CD4-positive, alpha-beta memory T cell (primary cell): ENCODE measurements at regions of chr2 and their contacts with region 1.

Region 1: DNA sequence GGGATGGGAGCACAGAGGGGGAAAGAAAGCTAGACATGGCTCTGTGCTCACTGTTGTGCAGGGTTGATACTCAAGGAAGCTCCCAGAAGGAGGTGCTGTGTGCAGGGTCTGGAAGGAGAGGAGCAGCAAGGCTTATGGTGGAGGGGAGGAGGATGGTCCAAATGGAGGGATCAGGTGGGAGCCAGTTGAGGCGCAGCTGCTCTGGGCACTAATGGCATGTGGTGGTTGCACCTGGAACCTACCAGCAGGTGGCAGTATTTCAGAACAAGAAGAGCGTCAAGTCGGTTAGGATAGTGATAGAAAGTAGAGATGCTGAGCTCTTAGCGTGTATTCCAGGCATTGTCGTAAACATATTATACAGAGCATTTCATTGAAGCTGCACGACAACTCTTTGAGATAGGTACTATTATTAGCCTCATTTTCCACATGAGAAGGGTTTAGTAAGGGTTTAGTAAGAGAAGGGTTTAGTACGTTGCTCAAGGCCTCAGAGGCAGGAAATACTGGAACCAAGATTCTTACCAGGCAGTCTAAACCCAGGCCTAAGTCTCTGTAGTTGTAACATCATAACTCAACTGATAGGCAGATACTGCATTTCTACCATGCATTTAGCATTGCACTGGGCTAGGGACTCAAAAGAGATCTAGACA is 223.7 kb downstream of the CYP26B1 start:
- DNase-seq: peak in 4 of 5 donors; percentile 30 to 46 (median 38)
- H3K4me3 ChIP-seq: no peak overlapping the region
- H3K4me3 Mint-ChIP-seq: peak overlapping the region in 1 of 8 donors; percentile 2
- H3K27ac ChIP-seq: no peak overlapping the region
- H3K27ac Mint-ChIP-seq: peak overlapping the region in 2 of 7 donors; percentile 20 to 51
- H3K4me1 ChIP-seq: no peaks in the 10 kb centered on the region
- H3K4me1 Mint-ChIP-seq: peaks cover 0 to 4% (median 0%) of the 10 kb centered on the region in 4 donors
- H3K27me3 ChIP-seq: no peaks in the 10 kb centered on the region
- H3K27me3 Mint-ChIP-seq: peaks cover 0 to 2% of the 10 kb centered on the region in 2 donors

Region 2: DNA sequence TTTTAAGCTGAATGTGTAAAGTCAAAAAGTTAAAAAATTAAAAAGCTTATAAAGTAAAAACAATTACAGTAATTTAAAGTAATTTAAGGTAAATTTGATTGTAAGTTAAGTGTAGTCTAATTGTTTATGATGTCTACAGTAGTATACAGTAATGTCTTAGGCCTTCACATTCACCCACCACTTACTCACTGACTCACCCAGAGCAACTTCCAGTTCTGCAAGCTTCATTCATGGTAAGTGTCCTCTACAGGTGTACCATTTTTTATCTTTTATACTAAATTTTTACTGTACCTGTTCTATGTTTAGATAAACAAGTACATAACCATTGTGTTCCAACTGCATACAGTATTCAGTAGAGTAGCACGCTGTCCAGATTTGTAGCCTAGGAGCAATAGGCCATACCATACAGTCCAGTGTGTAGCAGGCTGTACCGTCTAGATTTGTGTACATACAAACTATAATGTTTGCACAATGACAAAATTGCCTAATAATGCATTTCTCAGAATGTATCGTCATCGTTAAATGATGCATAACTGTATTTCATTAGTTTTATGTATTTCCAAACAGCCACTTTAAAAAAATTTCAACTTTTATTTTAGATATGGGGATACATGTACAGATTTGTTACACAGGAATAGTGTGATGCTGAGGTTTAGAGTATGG is 151.4 kb before region 1 on chr2:
- CTCF ChIA-PET with region 1: no interaction called
- POLR2A ChIA-PET with region 1: no interaction called
- intact Hi-C with region 1: no loop called
- DNase-seq: no peak
- H3K4me3 ChIP-seq: no peak overlapping the region
- H3K4me3 Mint-ChIP-seq: no peak overlapping the region
- H3K27ac ChIP-seq: no peak overlapping the region
- H3K27ac Mint-ChIP-seq: no peak overlapping the region
- H3K4me1 ChIP-seq: no peaks in the 10 kb centered on the region
- H3K4me1 Mint-ChIP-seq: no peaks in the 10 kb centered on the region
- H3K27me3 ChIP-seq: no peaks in the 10 kb centered on the region
- H3K27me3 Mint-ChIP-seq: peaks cover 0 to 3% of the 10 kb centered on the region in 2 donors

Region 3: DNA sequence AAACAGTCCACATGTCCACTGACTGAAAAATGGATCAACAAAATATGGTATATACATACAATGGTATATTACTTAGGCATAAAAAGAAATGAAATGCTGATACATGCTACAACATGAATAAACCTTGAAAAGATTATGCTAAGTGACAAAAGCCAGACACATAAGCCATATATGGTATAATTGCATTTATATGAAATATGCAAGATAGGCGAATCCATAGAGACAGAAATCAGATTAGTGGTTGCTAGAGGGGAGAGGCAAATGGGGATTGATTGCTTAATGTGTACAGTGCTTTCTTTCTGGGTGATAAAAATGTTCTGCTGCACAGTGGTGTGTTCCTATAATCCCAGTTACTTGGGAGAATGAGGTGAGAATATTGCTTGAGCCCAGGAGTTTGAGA is 52.7 kb after region 1 on chr2:
- CTCF ChIA-PET with region 1: no interaction called
- POLR2A ChIA-PET with region 1: no interaction called
- intact Hi-C with region 1: no loop called
- DNase-seq: no peak
- H3K4me3 ChIP-seq: no peak overlapping the region
- H3K4me3 Mint-ChIP-seq: no peak overlapping the region
- H3K27ac ChIP-seq: no peak overlapping the region
- H3K27ac Mint-ChIP-seq: no peak overlapping the region
- H3K4me1 ChIP-seq: no peaks in the 10 kb centered on the region
- H3K4me1 Mint-ChIP-seq: no peaks in the 10 kb centered on the region
- H3K27me3 ChIP-seq: no peaks in the 10 kb centered on the region
- H3K27me3 Mint-ChIP-seq: peaks cover 0 to 6% of the 10 kb centered on the region in 2 donors

Region 4: GRCh38 chr2:72150157-72150865 is 226.3 kb after region 1 on chr2:
- CTCF ChIA-PET with region 1: interaction called, 19 read pairs
- POLR2A ChIA-PET with region 1: no interaction called
- intact Hi-C with region 1: no loop called
- DNase-seq: peak in 4 of 5 donors; percentile 44 to 54 (median 47)
- H3K4me3 ChIP-seq: no peak overlapping the region
- H3K4me3 Mint-ChIP-seq: peak overlapping the region; percentile 77 to 96 (median 86)
- H3K27ac ChIP-seq: no peak overlapping the region
- H3K27ac Mint-ChIP-seq: peak overlapping the region in 1 of 7 donors; percentile 16
- H3K4me1 ChIP-seq: peaks cover 36% of the 10 kb centered on the region
- H3K4me1 Mint-ChIP-seq: peaks cover 24 to 47% (median 37%) of the 10 kb centered on the region in 4 donors
- H3K27me3 ChIP-seq: peaks cover 33% of the 10 kb centered on the region
- H3K27me3 Mint-ChIP-seq: peaks cover 48 to 52% of the 10 kb centered on the region in 2 donors

Region 5: GRCh38 chr2:72191441-72191840 is 267.4 kb after region 1 on chr2:
- CTCF ChIA-PET with region 1: no interaction called
- POLR2A ChIA-PET with region 1: no interaction called
- intact Hi-C with region 1: no loop called
- DNase-seq: no peak
- H3K4me3 ChIP-seq: no peak overlapping the region
- H3K4me3 Mint-ChIP-seq: no peak overlapping the region
- H3K27ac ChIP-seq: no peak overlapping the region
- H3K27ac Mint-ChIP-seq: no peak overlapping the region
- H3K4me1 ChIP-seq: no peaks in the 10 kb centered on the region
- H3K4me1 Mint-ChIP-seq: no peaks in the 10 kb centered on the region
- H3K27me3 ChIP-seq: no peaks in the 10 kb centered on the region
- H3K27me3 Mint-ChIP-seq: no peaks in the 10 kb centered on the region

Region 6: DNA sequence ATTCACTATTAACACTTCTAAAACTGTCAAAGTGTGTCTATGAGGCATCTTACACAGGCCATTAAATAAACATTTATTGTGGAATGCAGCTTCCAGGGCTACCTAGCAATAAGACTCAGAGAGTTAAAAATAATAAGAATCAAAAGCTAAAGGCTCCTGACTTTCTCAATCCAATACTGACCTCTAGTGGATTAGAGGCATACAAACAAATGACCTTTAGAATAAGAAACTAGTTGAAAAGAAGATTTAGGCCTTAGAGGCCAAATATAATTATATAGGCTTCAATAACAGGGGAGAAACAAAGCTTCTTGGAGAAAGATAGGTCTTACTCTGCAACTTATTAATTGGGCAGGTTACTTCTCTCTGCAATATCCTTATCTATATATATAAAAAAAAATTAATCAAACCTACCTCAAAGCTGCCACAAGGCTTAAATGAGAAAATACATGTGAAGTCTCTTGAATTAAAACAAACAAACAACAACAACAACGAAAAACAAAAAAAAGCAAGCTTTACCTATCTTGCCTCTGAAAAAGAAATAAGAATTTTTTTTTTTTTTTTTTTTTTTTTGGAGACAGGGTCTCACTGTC is 655.7 kb after region 1 on chr2:
- CTCF ChIA-PET with region 1: interaction called, 42 read pairs
- POLR2A ChIA-PET with region 1: no interaction called
- intact Hi-C with region 1: no loop called
- DNase-seq: peak in 4 of 5 donors; percentile 15 to 30 (median 22)
- H3K4me3 ChIP-seq: no peak overlapping the region
- H3K4me3 Mint-ChIP-seq: no peak overlapping the region
- H3K27ac ChIP-seq: no peak overlapping the region
- H3K27ac Mint-ChIP-seq: no peak overlapping the region
- H3K4me1 ChIP-seq: no peaks in the 10 kb centered on the region
- H3K4me1 Mint-ChIP-seq: peaks cover 0 to 6% (median 0%) of the 10 kb centered on the region in 4 donors
- H3K27me3 ChIP-seq: no peaks in the 10 kb centered on the region
- H3K27me3 Mint-ChIP-seq: no peaks in the 10 kb centered on the region

Region 7: GRCh38 chr2:72605836-72606442 is 681.9 kb after region 1 on chr2:
- CTCF ChIA-PET with region 1: interaction called, 3 read pairs
- POLR2A ChIA-PET with region 1: no interaction called
- intact Hi-C with region 1: loop called (anchors 10 kb)
- DNase-seq: no peak
- H3K4me3 ChIP-seq: no peak overlapping the region
- H3K4me3 Mint-ChIP-seq: no peak overlapping the region
- H3K27ac ChIP-seq: no peak overlapping the region
- H3K27ac Mint-ChIP-seq: no peak overlapping the region
- H3K4me1 ChIP-seq: no peaks in the 10 kb centered on the region
- H3K4me1 Mint-ChIP-seq: peaks cover 0 to 7% (median under 1%) of the 10 kb centered on the region in 4 donors
- H3K27me3 ChIP-seq: no peaks in the 10 kb centered on the region
- H3K27me3 Mint-ChIP-seq: no peaks in the 10 kb centered on the region

Region 8: DNA sequence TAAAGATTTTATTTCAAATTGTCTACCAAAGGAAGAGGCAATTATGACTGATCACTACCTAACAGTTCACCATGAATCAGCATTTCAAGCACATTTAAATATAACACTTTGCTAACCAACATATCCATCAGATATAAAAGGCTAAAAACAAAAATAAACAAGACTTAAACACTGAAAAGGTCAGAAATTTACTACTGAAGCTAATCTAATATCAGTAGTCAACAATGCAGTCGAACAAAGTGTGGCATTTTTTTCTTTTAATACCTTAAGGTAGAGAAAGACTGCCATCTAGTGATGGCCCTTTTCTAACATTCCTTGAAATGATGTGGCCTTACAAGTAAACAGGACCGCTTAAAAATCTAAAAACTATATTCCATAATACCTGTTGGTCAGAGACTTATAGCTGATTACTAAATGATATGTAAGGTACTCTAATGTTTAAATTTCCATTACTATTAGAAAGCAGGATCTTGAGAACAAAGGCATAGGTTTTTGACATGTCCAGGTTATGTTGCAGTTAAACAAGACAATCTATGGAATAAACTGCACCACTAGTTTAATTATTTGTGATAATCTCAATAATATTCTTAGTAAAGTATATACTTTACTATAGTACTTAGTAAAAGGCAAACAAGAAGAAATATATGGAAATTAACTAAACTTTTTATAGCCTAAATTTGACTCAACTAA is 821.8 kb after region 1 on chr2:
- CTCF ChIA-PET with region 1: interaction called, 23 read pairs
- POLR2A ChIA-PET with region 1: no interaction called
- intact Hi-C with region 1: no loop called
- DNase-seq: peak in 4 of 5 donors; percentile 15 to 22 (median 17)
- H3K4me3 ChIP-seq: no peak overlapping the region
- H3K4me3 Mint-ChIP-seq: no peak overlapping the region
- H3K27ac ChIP-seq: no peak overlapping the region
- H3K27ac Mint-ChIP-seq: no peak overlapping the region
- H3K4me1 ChIP-seq: no peaks in the 10 kb centered on the region
- H3K4me1 Mint-ChIP-seq: peaks cover 0 to 1% (median 0%) of the 10 kb centered on the region in 4 donors
- H3K27me3 ChIP-seq: no peaks in the 10 kb centered on the region
- H3K27me3 Mint-ChIP-seq: no peaks in the 10 kb centered on the region